CD14-positive monocyte (primary cell): ENCODE measurements at regions of chr7 and their contacts with region 1.

Region 1: DNA sequence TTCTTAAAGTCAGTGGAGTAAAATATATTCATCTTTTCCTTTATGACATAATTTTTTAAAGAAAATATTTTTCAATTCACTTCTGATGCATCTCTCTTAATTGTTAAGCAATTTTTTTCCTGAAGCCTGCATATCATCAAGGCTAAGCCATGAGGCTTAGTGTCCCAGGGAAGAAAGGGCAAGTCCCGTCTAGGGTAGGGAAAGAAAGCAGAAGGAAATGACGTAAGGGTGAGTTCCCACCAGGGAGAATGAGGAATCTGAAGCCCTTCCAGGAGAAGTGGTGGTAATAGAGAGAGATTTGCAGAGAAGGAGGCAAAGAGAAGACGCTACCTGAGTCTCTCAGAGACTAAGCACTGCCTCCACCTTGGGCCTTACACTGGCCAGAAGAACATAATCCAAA is 96.8 kb upstream of the NFE2L3 start:
- DNase-seq: peak in 1 of 3 donors; percentile 50
- H3K4me3 ChIP-seq: no peak overlapping the region
- H3K4me3 Mint-ChIP-seq: peak overlapping the region in 1 of 2 donors; percentile 56
- H3K27ac ChIP-seq: no peak overlapping the region
- H3K27ac Mint-ChIP-seq: no peak overlapping the region
- H3K4me1 ChIP-seq: peaks cover 0 to 15% of the 10 kb centered on the region in 2 donors
- H3K4me1 Mint-ChIP-seq: peaks cover 25% of the 10 kb centered on the region
- H3K27me3 ChIP-seq: peaks cover 24 to 61% of the 10 kb centered on the region in 2 donors
- H3K27me3 Mint-ChIP-seq: peaks cover 16 to 37% (median 21%) of the 10 kb centered on the region in 3 donors
- CTCF ChIP-seq: no peak

Region 2: DNA sequence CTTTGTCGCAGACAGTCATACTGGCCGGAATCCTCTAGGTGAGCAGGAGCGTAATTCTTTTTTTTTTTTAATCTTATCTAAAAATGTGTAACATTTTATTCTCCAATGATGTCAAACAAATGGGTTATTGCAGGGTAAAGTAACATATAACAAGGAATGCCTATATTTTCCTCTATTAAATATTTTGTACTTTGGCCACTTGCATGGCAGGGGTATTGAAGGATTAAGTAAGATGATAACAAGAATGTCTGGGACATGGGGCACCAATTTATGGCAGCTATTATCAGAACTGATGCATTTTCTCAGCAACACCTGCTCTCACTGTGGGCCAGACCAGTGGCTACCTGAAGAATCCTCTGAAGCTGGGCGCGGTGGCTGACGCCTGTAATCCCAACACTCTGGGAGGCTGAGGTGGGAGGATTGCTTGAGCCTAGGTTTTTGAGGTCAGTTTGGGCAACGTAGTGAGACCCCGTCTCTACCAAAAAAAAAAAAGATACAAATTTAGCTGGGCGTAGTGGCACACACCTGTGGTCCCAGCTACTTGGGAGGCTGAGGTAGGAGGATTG is 212.4 kb after region 1 on chr7:
- intact Hi-C with region 1: no loop called
- DNase-seq: no peak
- H3K4me3 ChIP-seq: no peak overlapping the region
- H3K4me3 Mint-ChIP-seq: no peak overlapping the region
- H3K27ac ChIP-seq: no peak overlapping the region
- H3K27ac Mint-ChIP-seq: no peak overlapping the region
- H3K4me1 ChIP-seq: no peaks in the 10 kb centered on the region
- H3K4me1 Mint-ChIP-seq: no peaks in the 10 kb centered on the region
- H3K27me3 ChIP-seq: no peaks in the 10 kb centered on the region
- H3K27me3 Mint-ChIP-seq: no peaks in the 10 kb centered on the region
- CTCF ChIP-seq: no peak

Region 3: GRCh38 chr7:27235387-27236311 is 1180.4 kb after region 1 on chr7:
- intact Hi-C with region 1: loop called in 1 of 2 experiments (anchors 5 kb)
- DNase-seq: peak in 2 of 3 donors; percentile 36 to 39
- H3K4me3 ChIP-seq: peak overlapping the region in 2 of 3 experiments; percentile 3 to 63
- H3K4me3 Mint-ChIP-seq: peak overlapping the region; percentile 51 to 88
- H3K27ac ChIP-seq: no peak overlapping the region
- H3K27ac Mint-ChIP-seq: no peak overlapping the region
- H3K4me1 ChIP-seq: peaks cover 17 to 18% of the 10 kb centered on the region in 2 donors
- H3K4me1 Mint-ChIP-seq: peaks cover 19% of the 10 kb centered on the region
- H3K27me3 ChIP-seq: peaks cover 70 to 86% of the 10 kb centered on the region in 2 donors
- H3K27me3 Mint-ChIP-seq: peaks cover 78 to 89% (median 88%) of the 10 kb centered on the region in 3 donors
- CTCF ChIP-seq: peak; percentile 39